Astrocyte of the cerebellum (primary cell): ENCODE measurements at regions of chr15 and their contacts with region 1.

Region 1: DNA sequence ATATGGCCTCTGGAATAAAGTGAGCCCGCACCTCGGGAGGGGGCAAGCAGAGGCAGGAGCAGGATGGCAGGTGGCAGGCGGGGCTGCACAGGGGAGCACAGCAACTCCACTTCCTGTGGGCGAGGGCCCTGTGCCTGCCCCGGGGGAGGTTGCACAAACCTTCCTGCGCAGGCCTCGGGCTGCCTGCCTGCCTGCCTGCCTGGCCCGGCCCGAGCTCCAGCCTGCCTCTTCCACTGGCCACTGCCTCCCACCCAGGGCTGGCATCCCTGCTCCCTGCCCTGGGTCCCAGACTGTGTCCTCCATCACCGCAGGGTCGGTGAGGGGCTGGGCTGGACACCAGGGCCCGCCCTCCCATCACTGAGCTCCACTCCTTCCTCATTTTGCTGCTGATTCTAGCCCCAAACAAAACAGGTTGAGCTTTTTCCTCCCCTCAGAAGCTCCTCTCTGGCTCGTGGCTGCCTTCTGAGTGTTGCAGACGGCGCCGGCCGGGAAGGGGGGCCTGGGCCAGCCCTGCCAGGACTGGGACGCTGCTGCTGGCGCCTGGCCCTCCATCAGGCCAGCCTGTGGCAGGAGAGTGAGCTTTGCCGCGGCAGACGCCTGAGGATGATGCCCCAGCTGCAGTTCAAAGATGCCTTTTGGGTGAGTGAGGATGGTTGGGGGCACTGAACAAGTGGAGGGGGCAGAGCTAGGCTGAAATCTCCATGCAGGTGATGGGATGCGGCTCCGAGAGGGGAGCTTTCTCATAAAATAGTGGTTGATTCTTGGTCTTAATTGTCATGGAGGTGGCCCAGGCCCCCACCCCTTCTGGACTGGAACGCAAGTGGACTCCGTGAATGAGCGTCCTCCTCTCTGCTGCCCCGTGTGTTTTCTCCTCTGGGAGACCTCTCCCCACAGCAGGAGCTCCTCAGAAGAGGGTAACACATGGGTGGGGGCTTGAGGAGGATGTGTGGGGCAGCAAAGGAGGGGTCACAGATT is at the start of gene PSTPIP1:
- DNase-seq: no peak
- H3K4me3 ChIP-seq: no peak within 1 kb of the TSS
- CTCF ChIP-seq: no peak

Region 2: DNA sequence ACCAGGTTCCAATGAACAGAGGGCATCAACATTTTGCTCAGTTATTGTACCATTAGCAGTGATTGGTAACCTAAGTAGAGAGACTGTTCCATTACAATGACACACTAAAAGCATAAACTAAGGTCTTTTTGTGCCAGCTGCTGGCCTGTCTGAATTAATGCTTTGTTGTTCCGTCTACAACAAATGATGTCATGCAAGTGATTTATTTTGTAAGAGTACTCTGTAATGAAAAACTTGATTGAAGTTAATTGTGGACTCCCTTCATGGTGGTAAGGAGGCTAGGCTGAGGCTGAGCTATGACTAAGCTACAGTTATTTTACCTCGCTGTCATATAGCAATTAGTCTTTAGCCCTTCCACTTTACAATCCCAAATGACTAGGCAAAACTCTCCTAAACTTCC is 40.5 kb before region 1 on chr15:
- in situ Hi-C with region 1: loop called (anchors 5 kb)
- DNase-seq: no peak
- H3K4me3 ChIP-seq: no peak overlapping the region
- CTCF ChIP-seq: no peak

Region 3: GRCh38 chr15:77144492-77145070 is 149.3 kb after region 1 on chr15:
- in situ Hi-C with region 1: no loop called
- DNase-seq: peak; percentile 95
- H3K4me3 ChIP-seq: no peak overlapping the region
- CTCF ChIP-seq: no peak